GM12878 (cell line): ENCODE measurements at regions of chr2 and their contacts with region 1.

Region 1: GRCh38 chr2:64214281-64215115 is 70.3 kb upstream of the PELI1 start:
- DNase-seq: peak; percentile 91
- ATAC-seq: peak; percentile 69
- H3K4me3 ChIP-seq: peak overlapping the region; percentile 28
- H3K27ac ChIP-seq: peak overlapping the region; percentile 98
- H3K4me1 ChIP-seq: peaks cover 44% of the 10 kb centered on the region
- H3K27me3 ChIP-seq: no peaks in the 10 kb centered on the region
- CTCF ChIP-seq: no peak
- EP300 ChIP-seq: peak; percentile 96 to 99
- POLR2A ChIP-seq: no peak
- RAD21 ChIP-seq: 0 out of 2 replicates have a peak, but pooled peaks have one; percentile 15

Region 2: DNA sequence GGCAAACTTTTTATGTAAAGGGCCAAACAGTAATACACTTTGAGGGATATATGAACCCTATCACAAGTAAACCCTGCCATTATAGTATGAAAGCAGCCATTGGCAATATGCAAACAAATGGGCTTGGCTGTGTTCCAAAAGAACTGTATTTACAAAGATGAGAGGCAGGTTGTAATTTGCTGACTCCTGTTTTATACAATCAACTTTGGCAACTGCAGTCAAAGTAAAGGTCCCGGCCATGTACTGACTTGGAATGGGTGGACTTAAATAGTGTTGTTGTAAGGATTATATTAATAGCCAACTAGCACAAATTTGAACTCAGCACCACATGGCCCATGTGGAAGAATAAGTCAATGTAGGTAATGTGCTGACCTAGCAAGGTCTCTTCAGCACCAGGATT is 849.6 kb before region 1 on chr2:
- CTCF ChIA-PET with region 1: no interaction called
- POLR2A ChIA-PET with region 1: no interaction called
- RAD21 ChIA-PET with region 1: no interaction called
- SMC1A ChIA-PET with region 1: no interaction called
- in situ Hi-C with region 1: no loop called
- intact Hi-C with region 1: no loop called
- DNase-seq: no peak
- ATAC-seq: no peak
- H3K4me3 ChIP-seq: no peak overlapping the region
- H3K27ac ChIP-seq: no peak overlapping the region
- H3K4me1 ChIP-seq: no peaks in the 10 kb centered on the region
- H3K27me3 ChIP-seq: no peaks in the 10 kb centered on the region
- CTCF ChIP-seq: no peak
- EP300 ChIP-seq: no peak
- POLR2A ChIP-seq: no peak
- RAD21 ChIP-seq: no peak

Region 3: DNA sequence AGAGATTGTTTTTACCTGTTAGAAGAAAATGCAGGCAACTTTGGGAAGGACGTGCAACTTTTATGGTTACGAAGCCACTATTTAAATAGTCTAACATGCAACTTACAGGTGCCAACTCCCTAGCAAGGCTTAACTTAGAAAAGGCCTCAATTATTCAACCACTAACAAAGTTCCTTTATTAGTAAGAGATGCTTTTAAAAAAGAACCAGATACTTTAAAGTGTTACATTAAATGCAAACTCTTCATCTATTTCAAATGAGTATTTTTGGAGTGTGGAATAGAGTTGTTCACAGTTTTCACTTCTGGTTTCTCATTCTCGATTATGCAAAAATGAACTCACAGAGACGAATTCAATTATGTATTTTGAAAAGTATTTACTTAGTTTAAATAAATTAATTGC is 122.0 kb before region 1 on chr2:
- CTCF ChIA-PET with region 1: interaction called, 3 read pairs
- POLR2A ChIA-PET with region 1: no interaction called
- RAD21 ChIA-PET with region 1: interaction called, 4 read pairs
- SMC1A ChIA-PET with region 1: interaction called, 10 read pairs
- in situ Hi-C with region 1: no loop called
- intact Hi-C with region 1: no loop called
- DNase-seq: peak; percentile 68
- ATAC-seq: peak; percentile 79
- H3K4me3 ChIP-seq: peak overlapping the region; percentile 18; the same call in 1 of the 2 replicates
- H3K27ac ChIP-seq: peak overlapping the region; percentile 64
- H3K4me1 ChIP-seq: peaks cover 28% of the 10 kb centered on the region
- H3K27me3 ChIP-seq: no peaks in the 10 kb centered on the region
- CTCF ChIP-seq: no peak
- EP300 ChIP-seq: peak; percentile 55 to 82; a peak in 3 of 4 replicates
- POLR2A ChIP-seq: no peak
- RAD21 ChIP-seq: no peak

Region 4: GRCh38 chr2:64144057-64145013 is 70.2 kb before region 1 on chr2 and contains the start of gene PELI1:
- CTCF ChIA-PET with region 1: interaction called, 5 read pairs
- POLR2A ChIA-PET with region 1: interaction called, 29 read pairs
- RAD21 ChIA-PET with region 1: interaction called, 54 read pairs
- SMC1A ChIA-PET with region 1: interaction called, 32 read pairs
- in situ Hi-C with region 1: no loop called
- intact Hi-C with region 1: loop called (anchors 1 kb)
- DNase-seq: peak; percentile 96
- ATAC-seq: peak; percentile 86
- H3K4me3 ChIP-seq: peak within 1 kb of the TSS; percentile 95
- H3K27ac ChIP-seq: peak within 1 kb of the TSS; percentile 85
- H3K4me1 ChIP-seq: peaks cover 3% of the 10 kb centered on the region
- H3K27me3 ChIP-seq: no peaks in the 10 kb centered on the region
- CTCF ChIP-seq: peak; percentile 13 to 49 (median 34); a peak in 3 of 6 replicates
- EP300 ChIP-seq: no peak
- POLR2A ChIP-seq: peak; percentile 97
- RAD21 ChIP-seq: peak; percentile 36; the same call in 1 of the 2 replicates
- polyA plus RNA-seq, gene PELI1: 12.1 to 13.2 TPM

Region 5: DNA sequence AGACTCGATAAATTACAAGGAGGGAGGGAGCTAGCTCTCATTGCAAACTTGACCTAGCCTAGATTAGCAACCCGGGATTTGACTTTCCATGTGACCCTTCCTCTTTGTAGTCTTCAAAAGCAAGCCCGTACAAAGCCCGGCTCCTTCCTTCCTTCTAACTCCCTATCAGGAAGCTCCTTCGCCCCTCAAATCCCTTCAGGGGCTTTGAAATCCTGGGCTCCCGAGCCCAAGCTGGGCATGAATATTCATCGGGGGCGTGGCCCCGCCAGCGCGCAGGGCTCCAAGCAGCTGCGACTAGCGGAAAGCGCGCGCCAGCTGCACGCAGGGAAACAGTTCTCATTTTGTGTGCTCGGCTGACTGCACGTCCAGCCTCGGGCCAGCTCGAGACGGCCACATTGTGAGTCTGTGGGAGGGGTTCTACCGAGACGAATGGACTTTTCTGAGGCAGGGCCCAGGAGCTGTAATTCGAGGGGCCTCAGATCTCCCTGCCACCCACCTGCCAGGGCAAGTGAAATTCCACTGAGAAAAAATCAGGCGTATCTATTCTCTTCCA is 13.7 kb after region 1 on chr2:
- CTCF ChIA-PET with region 1: interaction called, 24 read pairs
- POLR2A ChIA-PET with region 1: interaction called, 29 read pairs
- RAD21 ChIA-PET with region 1: interaction called, 39 read pairs
- SMC1A ChIA-PET with region 1: interaction called, 149 read pairs
- in situ Hi-C with region 1: no loop called
- intact Hi-C with region 1: no loop called
- DNase-seq: peak; percentile 39
- ATAC-seq: peak; percentile 99
- H3K4me3 ChIP-seq: peak overlapping the region; percentile 56
- H3K27ac ChIP-seq: peak overlapping the region; percentile 34
- H3K4me1 ChIP-seq: peaks cover 5% of the 10 kb centered on the region
- H3K27me3 ChIP-seq: no peaks in the 10 kb centered on the region
- CTCF ChIP-seq: no peak
- EP300 ChIP-seq: no peak
- POLR2A ChIP-seq: peak; percentile 84
- RAD21 ChIP-seq: no peak

Region 6: DNA sequence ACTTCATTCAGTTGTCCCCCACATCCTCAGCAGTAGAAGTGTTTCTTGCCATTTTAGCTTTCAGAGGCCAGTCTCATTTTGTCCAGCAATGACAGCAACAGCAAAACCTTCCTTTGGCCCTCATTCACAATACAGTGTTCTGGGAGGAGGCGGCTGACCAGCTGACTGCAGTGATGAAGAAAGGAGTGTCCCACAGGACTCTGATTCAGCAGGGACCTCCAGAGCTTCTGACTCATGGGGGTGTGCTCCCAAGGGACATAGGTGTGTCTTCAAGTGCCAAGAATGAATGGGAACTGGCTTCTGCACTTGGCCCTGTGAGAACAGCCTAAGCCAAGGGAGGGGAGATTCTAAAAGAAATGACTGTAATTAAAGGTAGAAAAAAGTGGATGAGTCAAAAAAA is 76.7 kb after region 1 on chr2:
- CTCF ChIA-PET with region 1: interaction called, 17 read pairs
- POLR2A ChIA-PET with region 1: interaction called, 25 read pairs
- RAD21 ChIA-PET with region 1: interaction called, 69 read pairs
- SMC1A ChIA-PET with region 1: interaction called, 37 read pairs
- in situ Hi-C with region 1: no loop called
- intact Hi-C with region 1: no loop called
- DNase-seq: no peak
- ATAC-seq: no peak
- H3K4me3 ChIP-seq: no peak overlapping the region
- H3K27ac ChIP-seq: no peak overlapping the region
- H3K4me1 ChIP-seq: peaks cover 12% of the 10 kb centered on the region
- H3K27me3 ChIP-seq: no peaks in the 10 kb centered on the region
- CTCF ChIP-seq: no peak
- EP300 ChIP-seq: no peak
- POLR2A ChIP-seq: no peak
- RAD21 ChIP-seq: no peak